ENCODE measurements at regions of chr6 and their contacts with region 1.

Region 1: DNA sequence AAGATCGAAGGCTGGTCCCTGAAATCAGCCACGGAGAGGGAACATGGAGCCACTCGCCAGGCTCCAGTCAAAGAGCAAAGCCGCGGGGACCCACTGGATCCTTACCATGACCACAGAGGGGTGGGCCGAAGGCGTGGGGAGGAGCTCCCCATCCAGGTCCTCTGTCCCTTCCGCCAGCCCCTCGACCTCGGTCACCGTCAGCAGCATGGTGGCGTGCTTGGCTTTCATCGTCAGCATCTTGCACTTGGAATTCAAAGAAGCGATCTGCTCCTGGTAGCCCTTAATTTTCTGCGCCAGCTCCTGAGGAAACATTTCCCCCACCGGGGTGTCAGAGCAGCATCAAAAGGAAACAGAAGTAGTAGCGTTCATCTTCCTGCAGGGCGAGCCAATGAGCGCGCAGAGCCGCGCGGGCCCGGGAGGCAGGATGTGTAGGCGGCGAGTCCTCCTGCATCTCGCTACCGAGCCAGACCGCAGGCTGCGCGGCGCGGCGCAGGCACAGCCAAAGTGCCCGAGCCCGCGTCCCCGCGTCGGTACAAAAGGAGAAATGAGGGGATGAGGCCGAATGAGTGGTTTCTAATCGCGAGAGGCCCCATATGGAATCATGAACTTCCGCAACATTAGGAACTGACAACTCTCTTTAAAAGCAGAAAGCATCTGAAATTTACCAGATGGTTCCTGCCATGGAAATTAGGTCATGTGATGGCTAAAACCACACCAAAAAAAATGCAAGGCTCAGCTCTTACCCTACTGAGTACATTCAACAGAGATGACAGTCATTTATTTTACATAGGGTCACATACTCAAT is 335.2 kb downstream of the SYNE1 start:
- DNase-seq: peak; percentile 78 to 92 (median 86)
- ATAC-seq: peak; percentile 96
- H3K4me3 Mint-ChIP-seq: peak overlapping the region; percentile 98 to 100 (median 100)
- H3K27ac Mint-ChIP-seq: peak overlapping the region; percentile 97 to 100 (median 98)
- H3K4me1 Mint-ChIP-seq: peaks cover 18 to 43% (median 40%) of the 10 kb centered on the region in 4 donors
- H3K27me3 Mint-ChIP-seq: no peaks in the 10 kb centered on the region

Region 2: DNA sequence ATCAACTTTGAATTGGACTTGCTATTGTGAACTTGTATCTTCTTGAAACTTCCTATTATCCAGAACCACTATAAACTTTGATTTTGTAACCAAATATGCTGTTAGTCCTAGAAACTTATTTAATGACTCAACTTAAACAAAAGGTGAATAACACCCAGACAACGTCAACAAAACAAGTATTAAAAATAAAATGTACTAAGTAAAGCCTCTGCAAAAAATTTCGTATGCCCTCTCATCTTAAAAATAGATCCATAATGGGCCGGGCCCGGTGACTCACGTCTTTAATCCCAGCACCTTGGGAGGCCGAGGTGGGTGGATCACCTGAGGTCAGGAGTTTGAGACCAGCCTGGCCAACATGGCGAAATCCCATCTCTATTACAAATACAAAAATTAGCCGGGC is 92.8 kb before region 1 on chr6:
- POLR2A ChIA-PET with region 1: no interaction called
- DNase-seq: no peak
- ATAC-seq: no peak
- H3K4me3 Mint-ChIP-seq: no peak overlapping the region
- H3K27ac Mint-ChIP-seq: peak overlapping the region in 3 of 10 donors; percentile 9 to 28 (median 21)
- H3K4me1 Mint-ChIP-seq: peaks cover 4 to 13% (median 5%) of the 10 kb centered on the region in 4 donors
- H3K27me3 Mint-ChIP-seq: no peaks in the 10 kb centered on the region

Region 3: DNA sequence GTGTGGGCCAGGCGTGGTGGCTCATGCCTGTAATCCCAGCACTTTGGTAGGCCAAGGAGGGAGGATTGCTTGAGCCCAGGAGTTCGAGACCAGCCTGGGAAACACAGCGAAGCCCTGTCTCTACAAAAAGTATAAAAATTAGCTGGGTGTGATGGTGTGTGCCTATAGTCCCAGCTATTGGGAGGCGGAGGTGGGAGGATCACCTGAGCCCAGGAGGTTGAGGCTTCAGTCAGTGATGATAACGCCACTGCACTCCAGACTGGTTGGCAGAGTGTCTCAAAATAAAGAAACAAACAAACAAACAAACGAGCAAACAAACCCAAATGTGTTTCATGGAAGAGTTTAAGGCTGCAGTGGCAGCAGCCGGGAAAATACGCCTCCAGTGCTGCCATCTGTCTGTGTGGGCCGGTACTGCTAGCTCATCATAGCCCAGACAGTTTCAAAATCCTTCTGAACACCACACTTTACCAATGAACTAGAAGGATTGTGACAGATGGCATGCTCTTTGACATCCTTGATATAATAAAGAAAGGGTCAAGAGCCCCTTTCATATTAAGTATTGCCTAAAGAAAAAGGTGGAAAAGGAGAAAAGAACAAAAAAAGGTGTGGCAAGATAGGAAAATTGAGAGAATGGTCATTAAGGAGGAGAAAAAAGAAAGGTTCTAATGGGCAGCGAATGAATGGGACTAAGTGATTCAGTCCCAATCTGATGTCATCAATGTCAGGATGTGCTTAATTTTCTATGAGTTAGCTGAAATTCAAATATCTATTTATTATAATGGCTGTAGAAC is 36.6 kb after region 1 on chr6:
- POLR2A ChIA-PET with region 1: interaction called, 21 read pairs
- DNase-seq: peak; percentile 24 to 71 (median 57)
- ATAC-seq: peak; percentile 79 to 84
- H3K4me3 Mint-ChIP-seq: no peak overlapping the region
- H3K27ac Mint-ChIP-seq: no peak overlapping the region
- H3K4me1 Mint-ChIP-seq: peaks cover 0 to 7% (median 2%) of the 10 kb centered on the region in 4 donors
- H3K27me3 Mint-ChIP-seq: peaks cover 0 to 1% (median 0%) of the 10 kb centered on the region in 5 donors

Measured in naive thymus-derived CD8-positive, alpha-beta T cell (primary cell).